PC-3 (cell line): ENCODE measurements at regions of chr1 and their contacts with region 1.

Region 1: DNA sequence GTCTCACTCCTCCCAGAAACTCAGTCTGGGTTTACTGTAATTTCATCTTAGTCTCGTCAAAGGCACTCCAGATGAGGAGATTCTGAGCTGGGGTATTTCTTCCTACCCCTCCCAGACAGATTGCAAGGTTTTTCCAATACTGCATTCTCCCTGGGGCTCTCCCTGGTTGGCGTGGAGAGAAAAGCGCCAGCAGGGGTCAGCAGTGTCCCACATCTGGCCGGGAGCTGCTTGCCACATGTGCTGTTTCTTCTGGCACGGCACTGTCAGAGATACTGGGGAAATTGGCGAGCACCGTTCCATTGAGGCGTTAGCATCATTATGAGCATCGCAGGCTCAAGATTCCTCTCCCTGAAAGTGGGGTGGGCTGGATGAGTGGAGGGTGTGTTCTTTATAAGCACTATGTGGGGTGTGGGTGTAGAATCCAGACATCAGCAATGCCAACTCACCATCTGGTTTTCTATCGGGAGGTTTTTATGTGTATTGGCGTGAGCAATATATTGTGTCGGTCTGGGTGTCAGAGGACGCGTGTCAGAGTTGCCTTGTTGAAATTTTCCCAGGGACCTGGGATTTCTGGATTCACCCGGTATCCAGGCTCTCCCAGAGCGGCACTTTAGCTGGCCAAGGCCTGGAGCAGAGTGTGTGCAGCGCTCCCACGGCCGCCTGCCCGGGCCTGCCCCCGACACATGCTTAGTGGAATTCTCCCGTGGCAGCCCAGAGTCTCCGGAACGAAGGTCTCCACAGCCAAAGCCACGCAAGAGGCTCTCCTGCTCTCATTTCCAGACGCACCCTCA is 8.0 kb upstream of the NAV1 start:
- DNase-seq: peak; percentile 70
- ATAC-seq: peak; percentile 88
- H3K4me3 ChIP-seq: no peak overlapping the region
- H3K27ac ChIP-seq: no peak overlapping the region
- H3K4me1 ChIP-seq: peaks cover 9% of the 10 kb centered on the region
- H3K27me3 ChIP-seq: no peaks in the 10 kb centered on the region
- CTCF ChIP-seq: peak; percentile 82

Region 2: GRCh38 chr1:201703621-201704439 is 172.9 kb after region 1 on chr1:
- CTCF ChIA-PET with region 1: no interaction called
- POLR2A ChIA-PET with region 1: no interaction called
- intact Hi-C with region 1: loop called (anchors 1 kb)
- DNase-seq: peak; percentile 78
- ATAC-seq: peak; percentile 97
- H3K4me3 ChIP-seq: no peak overlapping the region
- H3K27ac ChIP-seq: no peak overlapping the region
- H3K4me1 ChIP-seq: no peaks in the 10 kb centered on the region
- H3K27me3 ChIP-seq: no peaks in the 10 kb centered on the region
- CTCF ChIP-seq: peak; percentile 85

Region 3: GRCh38 chr1:201828820-201829774 is 298.2 kb after region 1 on chr1 and contains the start of gene IPO9:
- CTCF ChIA-PET with region 1: interaction called, 11 read pairs
- POLR2A ChIA-PET with region 1: no interaction called
- intact Hi-C with region 1: no loop called
- DNase-seq: peak; percentile 90
- ATAC-seq: peak; percentile 87
- H3K4me3 ChIP-seq: peak within 1 kb of the TSS; percentile 99
- H3K27ac ChIP-seq: peak within 1 kb of the TSS; percentile 63
- H3K4me1 ChIP-seq: peaks cover 21% of the 10 kb centered on the region
- H3K27me3 ChIP-seq: no peaks in the 10 kb centered on the region
- CTCF ChIP-seq: peak; percentile 75
- total RNA-seq, gene IPO9: 21.6 and 23.6 TPM in 2 replicates